MCF 10A (cell line): ENCODE measurements at regions of chr2 and their contacts with region 1.

Region 1: GRCh38 chr2:30026087-30027055 is 105.0 kb upstream of the ALK start:
- DNase-seq: peak; percentile 79
- H3K4me3 Mint-ChIP-seq: no peak overlapping the region
- H3K27ac Mint-ChIP-seq: no peak overlapping the region
- H3K4me1 Mint-ChIP-seq: no peaks in the 10 kb centered on the region
- H3K27me3 Mint-ChIP-seq: peaks cover 39% of the 10 kb centered on the region
- CTCF ChIP-seq: peak; percentile 71

Region 2: GRCh38 chr2:29295857-29296256 is 730.5 kb before region 1 on chr2:
- CTCF ChIA-PET with region 1: interaction called, 4 read pairs
- POLR2A ChIA-PET with region 1: no interaction called
- intact Hi-C with region 1: loop called (anchors 5 kb)
- DNase-seq: peak; percentile 44
- H3K4me3 Mint-ChIP-seq: no peak overlapping the region
- H3K27ac Mint-ChIP-seq: no peak overlapping the region
- H3K4me1 Mint-ChIP-seq: no peaks in the 10 kb centered on the region
- H3K27me3 Mint-ChIP-seq: peaks cover 81% of the 10 kb centered on the region
- CTCF ChIP-seq: peak; percentile 33

Region 3: GRCh38 chr2:29936020-29936419 is 90.4 kb before region 1 on chr2:
- CTCF ChIA-PET with region 1: interaction called, 247 read pairs
- POLR2A ChIA-PET with region 1: no interaction called
- intact Hi-C with region 1: no loop called
- DNase-seq: no peak
- H3K4me3 Mint-ChIP-seq: no peak overlapping the region
- H3K27ac Mint-ChIP-seq: no peak overlapping the region
- H3K4me1 Mint-ChIP-seq: no peaks in the 10 kb centered on the region
- H3K27me3 Mint-ChIP-seq: peaks cover 56% of the 10 kb centered on the region
- CTCF ChIP-seq: no peak

Region 4: GRCh38 chr2:30037016-30037415 is 10.6 kb after region 1 on chr2:
- CTCF ChIA-PET with region 1: interaction called, 23 read pairs
- POLR2A ChIA-PET with region 1: no interaction called
- intact Hi-C with region 1: no loop called
- DNase-seq: no peak
- H3K4me3 Mint-ChIP-seq: no peak overlapping the region
- H3K27ac Mint-ChIP-seq: no peak overlapping the region
- H3K4me1 Mint-ChIP-seq: no peaks in the 10 kb centered on the region
- H3K27me3 Mint-ChIP-seq: peaks cover 35% of the 10 kb centered on the region
- CTCF ChIP-seq: no peak

Region 5: GRCh38 chr2:30072250-30072842 is 46.0 kb after region 1 on chr2:
- CTCF ChIA-PET with region 1: interaction called, 9 read pairs
- POLR2A ChIA-PET with region 1: no interaction called
- intact Hi-C with region 1: loop called (anchors 2 kb)
- DNase-seq: peak; percentile 85
- H3K4me3 Mint-ChIP-seq: no peak overlapping the region
- H3K27ac Mint-ChIP-seq: no peak overlapping the region
- H3K4me1 Mint-ChIP-seq: no peaks in the 10 kb centered on the region
- H3K27me3 Mint-ChIP-seq: peaks cover 65% of the 10 kb centered on the region
- CTCF ChIP-seq: peak; percentile 74